ENCODE measurements at regions of chr22 and their contacts with region 1.

Region 1: DNA sequence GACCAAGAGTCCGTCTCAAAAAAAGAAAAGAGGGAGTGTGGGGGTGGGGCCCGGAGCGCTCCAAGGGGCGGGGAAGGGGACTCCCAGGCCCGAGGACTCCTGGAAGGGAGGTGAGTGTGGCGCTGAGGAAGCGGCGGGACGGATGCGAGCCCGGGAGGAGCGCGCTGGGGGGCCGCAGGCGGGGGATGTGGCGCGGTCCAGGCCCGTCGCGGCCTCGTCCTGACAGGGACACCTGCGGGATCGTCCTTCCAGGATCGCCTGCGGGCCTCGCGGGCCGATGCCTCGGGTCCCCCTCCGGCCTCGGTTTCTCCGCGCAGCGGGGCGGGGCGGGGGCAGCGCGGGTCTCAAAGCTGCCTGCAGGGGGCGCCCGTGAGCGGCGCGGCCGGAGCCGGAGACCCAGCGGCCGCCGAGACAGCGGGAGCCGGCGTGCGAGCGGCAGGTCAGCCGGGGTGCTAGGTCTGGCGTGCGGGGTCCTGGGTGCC is 3.8 kb upstream of the ADORA2A start:
- DNase-seq: peak; percentile 90
- CTCF ChIP-seq: peak; percentile 86

Region 2: GRCh38 chr22:24407278-24407665 is 16.3 kb before region 1 on chr22:
- CTCF ChIA-PET with region 1: interaction called, 18 read pairs
- POLR2A ChIA-PET with region 1: no interaction called
- DNase-seq: no peak
- CTCF ChIP-seq: no peak

Region 3: GRCh38 chr22:24460418-24461089 is 37.0 kb after region 1 on chr22:
- CTCF ChIA-PET with region 1: interaction called, 14 read pairs
- POLR2A ChIA-PET with region 1: interaction called, 3 read pairs
- DNase-seq: peak; percentile 51
- CTCF ChIP-seq: no peak

Region 4: DNA sequence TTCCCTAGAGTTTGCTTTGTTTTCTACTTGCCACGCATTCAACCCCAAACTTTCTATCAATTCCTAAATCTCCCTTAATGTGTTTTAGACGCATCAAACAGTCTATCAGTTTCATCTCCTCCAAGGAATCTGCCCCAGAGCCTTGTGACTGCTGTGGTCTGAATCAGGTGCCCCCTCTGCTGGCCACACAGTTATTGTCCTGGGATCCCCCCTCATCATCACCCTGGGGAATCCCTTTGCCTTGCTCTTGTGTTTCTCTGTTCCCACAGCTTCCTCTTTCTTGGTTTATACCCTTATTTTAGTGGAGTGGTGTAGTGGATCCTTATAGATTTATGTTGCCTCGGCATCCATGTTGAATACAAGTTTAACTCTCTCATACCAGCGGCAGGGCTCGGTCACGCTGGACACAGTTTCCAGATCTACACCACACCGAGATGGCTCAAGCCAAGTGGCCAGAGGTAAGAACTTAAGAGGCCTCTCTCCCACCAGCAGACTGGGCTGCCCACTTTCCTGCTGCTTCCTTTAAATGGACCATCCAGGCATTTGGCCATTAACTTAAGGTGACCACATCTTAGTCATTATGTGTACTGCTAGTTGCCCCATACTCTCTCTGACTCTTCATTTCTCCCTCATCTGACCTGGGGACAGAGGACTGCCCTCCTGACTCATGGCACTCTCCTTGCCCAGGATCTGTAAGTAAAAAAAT is 79.7 kb after region 1 on chr22:
- CTCF ChIA-PET with region 1: interaction called, 10 read pairs
- POLR2A ChIA-PET with region 1: interaction called, 6 read pairs
- DNase-seq: peak; percentile 87
- CTCF ChIP-seq: peak; percentile 76

Measured in GM10248 (cell line).